Activated CD8-positive, alpha-beta memory T cell treated with anti-CD3 and anti-CD28 coated beads, Interleukin-2, amount 10 ng/mL, durations not matched to agents 7 days and 5 days (primary cell): ENCODE measurements at regions of chr7 and their contacts with region 1.

Region 1: GRCh38 chr7:54773472-54774399 is 14.7 kb upstream of the SEC61G start:
- DNase-seq: peak; percentile 70
- ATAC-seq: peak; percentile 68
- H3K4me3 Mint-ChIP-seq: peak overlapping the region; percentile 44
- H3K27ac Mint-ChIP-seq: no peak overlapping the region
- H3K4me1 Mint-ChIP-seq: peaks cover 4% of the 10 kb centered on the region
- H3K27me3 Mint-ChIP-seq: peaks cover 32% of the 10 kb centered on the region

Region 2: DNA sequence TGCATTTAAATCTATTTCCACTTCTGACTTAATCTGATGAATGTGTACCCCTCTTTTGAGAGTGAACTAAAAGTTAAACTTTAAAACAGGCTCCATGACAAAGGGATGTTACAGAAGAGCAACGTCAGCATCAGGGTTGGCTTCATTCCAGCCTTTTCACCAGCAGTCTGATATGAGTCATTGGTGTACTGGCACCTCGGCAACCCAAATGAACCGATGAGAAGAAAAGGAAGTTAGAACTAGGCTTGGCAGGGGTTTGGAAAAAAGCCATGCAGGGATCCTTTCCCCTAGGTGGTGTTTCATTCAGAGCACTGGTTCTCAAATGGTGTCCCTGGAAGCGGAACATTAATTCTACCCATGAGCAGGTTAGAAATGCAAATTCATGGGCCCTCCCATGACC is 68.3 kb before region 1 on chr7:
- CTCF ChIA-PET with region 1: no interaction called
- DNase-seq: no peak
- ATAC-seq: no peak
- H3K4me3 Mint-ChIP-seq: no peak overlapping the region
- H3K27ac Mint-ChIP-seq: no peak overlapping the region
- H3K4me1 Mint-ChIP-seq: no peaks in the 10 kb centered on the region
- H3K27me3 Mint-ChIP-seq: no peaks in the 10 kb centered on the region

Region 3: DNA sequence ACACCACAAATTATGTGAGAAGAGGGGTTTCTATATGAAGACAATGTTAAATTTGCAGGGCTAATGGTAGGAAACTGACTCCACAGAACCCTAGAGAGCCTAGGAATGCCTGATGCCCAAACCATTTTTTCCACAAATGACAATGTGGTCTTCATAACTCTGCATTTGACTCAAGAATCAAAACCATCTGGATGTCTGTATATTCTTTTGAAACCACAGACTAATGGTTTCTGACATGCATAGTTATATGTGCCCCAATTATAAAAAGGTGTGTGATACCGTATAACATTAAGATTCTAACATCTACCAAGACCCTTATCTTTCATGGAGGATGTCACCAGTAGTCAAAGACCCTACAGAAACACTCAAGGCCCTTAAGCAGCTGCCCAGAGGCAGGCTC is 35.0 kb before region 1 on chr7:
- CTCF ChIA-PET with region 1: no interaction called
- DNase-seq: no peak
- ATAC-seq: no peak
- H3K4me3 Mint-ChIP-seq: no peak overlapping the region
- H3K27ac Mint-ChIP-seq: no peak overlapping the region
- H3K4me1 Mint-ChIP-seq: peaks cover 2% of the 10 kb centered on the region
- H3K27me3 Mint-ChIP-seq: no peaks in the 10 kb centered on the region

Region 4: DNA sequence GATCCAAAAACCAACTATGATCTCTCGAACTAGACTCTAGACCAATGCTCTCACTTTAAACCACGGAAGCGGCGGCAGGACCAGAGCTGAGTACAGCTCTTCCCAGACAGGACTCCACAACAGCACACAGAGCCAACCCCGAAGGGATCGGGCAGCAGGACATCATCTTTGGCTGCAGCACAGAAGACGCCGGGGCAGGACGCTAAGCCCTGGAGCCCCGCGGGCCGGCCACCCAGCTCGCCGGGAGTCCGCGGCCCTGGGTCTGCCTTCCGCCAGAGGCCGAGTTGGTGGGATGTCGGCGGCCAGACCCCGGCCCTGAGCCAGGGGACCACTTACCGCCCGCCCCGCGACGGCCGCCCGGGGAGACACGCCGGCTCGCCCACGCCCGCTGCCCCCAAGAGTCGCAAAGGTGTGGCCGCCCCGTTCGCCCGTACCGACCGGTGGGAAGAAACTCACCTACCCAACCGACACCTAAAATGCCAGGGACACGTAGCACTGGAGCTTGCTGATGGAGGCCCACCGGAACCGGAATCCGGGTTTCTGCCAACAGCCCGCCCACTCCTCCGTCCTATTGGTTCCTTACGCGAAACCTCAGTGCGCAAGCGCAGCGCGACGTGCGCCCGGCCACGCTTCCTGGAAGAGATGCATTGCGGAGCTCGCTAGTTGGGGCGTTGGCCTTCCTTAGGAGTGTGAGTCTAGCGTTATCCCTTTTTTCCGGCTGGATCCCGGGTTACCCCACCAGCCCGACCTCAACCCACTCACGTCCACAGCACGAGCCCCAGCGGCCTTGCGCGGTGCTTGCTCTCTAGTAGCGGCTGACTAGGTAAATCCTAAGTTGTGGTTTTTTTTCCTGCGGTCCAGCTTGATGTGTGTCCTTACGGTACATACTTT is 14.8 kb before region 1 on chr7 and contains the start of gene SEC61G:
- CTCF ChIA-PET with region 1: interaction called, 28 read pairs
- DNase-seq: peak; percentile 97
- ATAC-seq: peak; percentile 99
- H3K4me3 Mint-ChIP-seq: peak within 1 kb of the TSS; percentile 99
- H3K27ac Mint-ChIP-seq: peak within 1 kb of the TSS; percentile 93
- H3K4me1 Mint-ChIP-seq: peaks cover 20% of the 10 kb centered on the region
- H3K27me3 Mint-ChIP-seq: peaks cover 11% of the 10 kb centered on the region
- total RNA-seq, gene SEC61G: 83.1 to 105 TPM

Region 5: GRCh38 chr7:55255496-55256435 is 482.0 kb after region 1 on chr7:
- CTCF ChIA-PET with region 1: interaction called, 36 read pairs
- DNase-seq: peak; percentile 72
- ATAC-seq: peak; percentile 89
- H3K4me3 Mint-ChIP-seq: no peak overlapping the region
- H3K27ac Mint-ChIP-seq: no peak overlapping the region
- H3K4me1 Mint-ChIP-seq: peaks cover 9% of the 10 kb centered on the region
- H3K27me3 Mint-ChIP-seq: peaks cover 58% of the 10 kb centered on the region